Aorta (tissue), 5 donors: ENCODE measurements at regions of chr12 and their contacts with region 1.

Region 1: DNA sequence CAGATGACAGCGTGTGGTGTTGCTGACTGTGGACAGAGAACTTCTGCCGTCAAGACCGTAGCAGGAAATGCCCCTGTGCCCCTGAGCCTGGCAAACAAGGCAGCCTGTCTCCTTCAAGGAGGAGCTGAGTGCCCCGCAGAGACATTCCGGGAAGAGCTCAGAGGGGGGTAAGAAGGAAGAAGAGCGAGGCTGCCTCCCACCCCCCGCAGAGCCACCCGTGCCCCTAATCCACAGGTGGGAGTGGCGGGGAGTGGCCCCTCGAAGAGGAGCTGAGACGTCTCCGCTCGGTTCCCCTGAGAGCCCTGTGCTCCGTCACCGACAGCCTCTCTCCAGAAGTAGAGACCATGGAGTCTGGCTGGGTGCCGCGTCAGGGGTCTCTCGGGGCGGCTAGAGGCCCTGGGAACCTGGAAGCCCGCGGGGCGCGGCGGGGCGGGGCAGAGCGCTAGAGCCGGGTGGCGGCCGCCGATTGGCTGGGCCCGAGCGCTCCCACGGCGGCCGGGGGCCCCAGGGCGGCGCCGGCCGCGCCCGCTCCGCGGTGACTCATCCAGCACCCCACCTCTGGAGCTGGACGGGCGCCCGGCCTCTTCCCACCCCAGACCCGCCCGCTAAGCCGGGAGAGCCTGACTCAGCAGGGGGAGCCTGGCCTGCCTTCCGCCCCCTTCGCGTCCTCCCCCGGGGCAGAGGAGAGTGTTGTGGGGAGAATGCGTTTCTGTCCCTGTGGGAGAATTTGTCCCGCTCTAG is 25.2 kb upstream of the KRT78 start:
- DNase-seq: peak; percentile 94 to 96
- ATAC-seq: peak; percentile 72
- H3K4me3 ChIP-seq: no peak overlapping the region
- H3K27ac ChIP-seq: peak overlapping the region in 1 of 2 donors; percentile 31
- H3K4me1 ChIP-seq: no peaks in the 10 kb centered on the region
- H3K27me3 ChIP-seq: no peaks in the 10 kb centered on the region

Region 2: DNA sequence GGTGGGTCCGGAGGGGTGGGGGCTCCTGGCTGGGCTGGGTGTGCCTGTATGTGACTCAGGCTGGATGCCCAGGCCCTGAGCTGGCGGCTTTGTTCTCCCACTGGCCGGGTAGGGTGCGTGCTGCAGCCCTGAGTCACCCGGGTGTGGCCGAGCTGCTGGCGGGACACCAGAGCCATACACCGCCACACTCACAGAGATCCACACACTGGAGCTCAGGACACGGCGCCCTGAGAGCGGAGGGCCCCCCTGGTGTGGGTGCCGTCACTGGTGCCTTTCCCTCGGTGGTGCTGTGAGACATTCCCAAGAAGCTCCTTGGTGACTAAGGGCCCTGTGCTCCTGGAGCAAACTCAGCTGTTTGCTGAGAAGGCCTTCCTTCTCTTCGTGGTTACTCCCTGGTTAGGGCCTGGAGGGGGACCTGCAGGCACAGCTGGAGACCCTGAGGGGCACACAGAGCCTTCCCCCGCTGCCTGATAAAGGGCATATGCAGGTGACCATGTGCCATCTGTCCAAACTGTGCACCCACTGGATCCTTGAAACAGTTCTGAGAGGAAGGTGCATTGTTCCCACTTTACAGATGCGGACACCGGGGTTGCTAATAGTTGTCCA is 726.5 kb before region 1 on chr12:
- intact Hi-C with region 1: loop called (anchors 2 to 5 kb)
- DNase-seq: peak; percentile 96 to 98
- ATAC-seq: peak; percentile 88
- H3K4me3 ChIP-seq: no peak overlapping the region
- H3K27ac ChIP-seq: peak overlapping the region in 1 of 2 donors; percentile 64
- H3K4me1 ChIP-seq: peaks cover 0 to 2% of the 10 kb centered on the region in 2 donors
- H3K27me3 ChIP-seq: no peaks in the 10 kb centered on the region

Region 3: DNA sequence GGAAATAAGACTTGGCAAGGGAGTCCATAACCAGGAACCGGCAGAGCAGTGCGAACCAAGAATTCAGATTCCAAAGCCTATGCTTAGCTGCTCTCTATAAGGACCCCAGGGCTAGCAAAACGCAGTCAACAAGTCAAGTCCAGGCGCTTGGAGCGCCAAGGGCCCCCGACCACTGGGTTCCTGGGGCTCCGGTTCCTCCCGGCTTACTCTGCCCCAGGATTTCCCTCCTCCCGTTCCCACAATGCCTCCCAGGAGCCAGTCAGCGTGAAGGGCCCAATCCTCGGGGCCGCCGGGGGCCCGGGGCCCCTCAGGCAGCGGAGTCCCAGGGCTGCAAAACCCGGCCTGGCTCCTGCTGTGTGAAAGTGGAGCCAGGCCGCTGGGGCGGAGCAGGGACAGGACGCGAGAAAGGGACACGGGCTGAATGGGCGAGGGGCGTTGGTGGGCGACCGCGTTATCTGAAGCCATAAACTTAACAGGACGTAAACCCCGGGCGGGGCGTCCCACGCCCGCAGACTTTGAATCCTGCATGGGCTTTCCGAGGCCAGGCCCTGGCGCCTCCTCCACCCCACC is 29.4 kb after region 1 on chr12:
- intact Hi-C with region 1: no loop called
- DNase-seq: peak; percentile 87 to 89
- ATAC-seq: peak; percentile 86
- H3K4me3 ChIP-seq: peak overlapping the region; percentile 7 to 24
- H3K27ac ChIP-seq: peak overlapping the region in 1 of 2 donors; percentile 0
- H3K4me1 ChIP-seq: no peaks in the 10 kb centered on the region
- H3K27me3 ChIP-seq: no peaks in the 10 kb centered on the region

Region 4: GRCh38 chr12:53638057-53638456 is 764.1 kb after region 1 on chr12:
- intact Hi-C with region 1: no loop called
- DNase-seq: no peak
- ATAC-seq: no peak
- H3K4me3 ChIP-seq: no peak overlapping the region
- H3K27ac ChIP-seq: no peak overlapping the region
- H3K4me1 ChIP-seq: no peaks in the 10 kb centered on the region
- H3K27me3 ChIP-seq: no peaks in the 10 kb centered on the region